GM18951 (cell line): ENCODE measurements at regions of chr6 and their contacts with region 1.

Region 1: GRCh38 chr6:106979427-106979884 is 4.9 kb upstream of the CD24 start:
- POLR2A ChIP-seq: no peak

Region 2: DNA sequence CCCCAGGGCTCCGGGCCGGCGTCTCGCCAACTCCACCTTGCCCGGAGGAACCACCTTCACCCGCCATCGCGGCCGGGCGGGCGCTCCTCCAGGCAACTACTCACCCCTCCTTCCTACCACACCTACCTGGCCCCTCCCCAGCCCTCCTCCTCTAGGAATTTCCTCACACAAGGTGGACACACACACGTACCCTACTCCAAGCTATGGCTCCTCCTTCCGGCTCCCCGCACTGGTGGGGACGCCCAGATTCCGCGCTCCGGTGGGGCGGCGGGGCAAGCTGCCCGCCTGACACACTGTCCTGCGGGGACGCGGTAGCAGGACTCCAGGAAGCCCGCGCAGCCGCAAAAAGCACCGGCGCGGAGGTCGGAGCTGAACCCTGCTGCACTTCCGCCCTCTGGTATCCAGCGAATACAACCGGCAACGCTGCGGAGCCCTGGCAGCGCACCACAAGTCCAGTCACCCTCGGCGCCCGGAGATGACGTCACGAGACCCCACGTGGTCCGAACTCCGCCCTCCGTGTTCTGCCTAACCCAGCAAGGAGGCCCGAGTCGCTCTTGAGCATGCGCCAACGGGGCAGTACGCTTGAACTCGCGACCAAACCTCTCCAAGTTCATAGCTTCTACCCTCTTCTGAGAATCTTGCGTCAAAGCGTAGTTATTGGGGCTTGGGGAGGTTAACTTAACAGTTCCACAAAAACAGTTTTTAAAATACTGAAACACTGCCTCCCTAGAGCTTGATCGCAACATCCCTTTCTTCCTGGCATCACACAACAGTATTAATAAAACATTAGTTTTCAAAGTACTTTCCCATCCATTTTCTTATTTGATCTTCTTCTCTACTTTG is 653.9 kb before region 1 on chr6 and contains the start of gene ATG5:
- in situ Hi-C with region 1: loop called (anchors 25 kb)
- POLR2A ChIP-seq: peak; percentile 90

Region 3: DNA sequence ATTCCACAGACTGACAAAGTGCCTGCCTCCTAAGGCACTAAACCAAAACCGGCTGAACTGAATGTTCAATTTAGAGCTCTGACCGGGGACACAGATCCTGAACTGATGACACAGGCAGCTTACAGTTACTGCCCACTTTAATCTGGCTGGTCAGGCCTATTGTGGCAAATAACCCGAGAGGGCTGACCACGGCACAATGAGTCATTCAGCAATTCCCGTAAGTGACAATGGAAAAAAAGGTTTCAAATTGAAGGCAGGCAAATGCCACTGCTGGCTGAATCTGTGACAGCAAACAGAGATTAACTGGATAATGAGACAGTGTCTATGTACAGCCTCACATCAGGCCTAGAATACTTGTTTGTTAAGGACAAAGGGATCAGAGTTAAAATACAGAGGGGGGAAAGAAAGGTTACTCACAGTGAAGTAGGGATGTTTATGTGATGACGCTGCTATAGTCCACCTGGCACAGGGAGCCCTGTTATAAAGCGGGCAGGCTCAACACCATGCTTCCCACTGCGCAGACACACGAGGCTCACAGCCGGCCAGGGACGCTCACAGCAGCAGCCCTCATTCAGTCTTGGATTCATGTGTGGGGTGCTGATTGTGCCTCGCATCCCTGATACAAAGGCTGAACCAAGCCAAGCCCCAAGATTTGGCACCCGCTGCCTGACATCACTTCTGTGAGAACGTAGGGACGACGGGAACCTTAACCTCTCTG is 404.6 kb before region 1 on chr6:
- in situ Hi-C with region 1: loop called (anchors 25 kb)
- POLR2A ChIP-seq: no peak

Region 4: GRCh38 chr6:106746660-106747059 is 232.8 kb before region 1 on chr6:
- in situ Hi-C with region 1: no loop called
- POLR2A ChIP-seq: no peak

Region 5: GRCh38 chr6:107540465-107540857 is 561.0 kb after region 1 on chr6:
- in situ Hi-C with region 1: no loop called
- POLR2A ChIP-seq: no peak